ENCODE measurements at regions of chr1 and their contacts with region 1.

Region 1: DNA sequence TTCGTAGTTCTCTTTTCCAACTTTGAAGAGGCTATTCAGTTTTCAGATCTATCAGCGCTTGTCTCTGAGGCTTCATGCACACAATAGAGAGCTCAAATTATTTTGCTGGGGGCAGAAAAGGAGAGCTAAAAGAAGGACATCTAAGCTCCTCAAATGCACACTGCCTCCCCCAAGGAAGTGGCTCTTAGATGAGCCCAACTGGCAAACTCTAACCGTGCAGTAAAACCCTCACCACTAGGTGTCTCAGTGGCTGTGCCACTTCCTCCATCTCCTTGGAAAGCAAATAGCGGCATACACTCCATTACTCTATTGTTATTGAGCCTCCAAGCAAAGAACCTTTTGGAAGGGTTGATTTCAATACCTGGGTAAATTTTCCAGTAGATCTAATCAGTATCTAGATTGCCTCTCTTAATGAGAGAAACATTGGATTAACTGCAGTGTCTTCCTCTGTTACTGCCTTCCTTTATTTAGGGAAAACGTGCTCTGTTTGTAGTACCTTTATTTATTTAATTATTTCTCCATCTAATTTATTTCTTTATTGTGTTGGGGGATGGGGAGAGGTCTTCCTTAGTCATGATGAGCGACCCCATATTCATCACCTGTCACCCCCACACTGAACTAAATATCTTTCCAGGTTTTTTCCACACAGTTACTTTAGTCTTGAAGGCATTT is 9.2 kb upstream of the SFPQ start:
- DNase-seq: peak; percentile 84
- H3K4me3 Mint-ChIP-seq: no peak overlapping the region
- H3K27ac Mint-ChIP-seq: no peak overlapping the region
- H3K4me1 Mint-ChIP-seq: peaks cover 7% of the 10 kb centered on the region
- H3K27me3 Mint-ChIP-seq: no peaks in the 10 kb centered on the region

Region 2: DNA sequence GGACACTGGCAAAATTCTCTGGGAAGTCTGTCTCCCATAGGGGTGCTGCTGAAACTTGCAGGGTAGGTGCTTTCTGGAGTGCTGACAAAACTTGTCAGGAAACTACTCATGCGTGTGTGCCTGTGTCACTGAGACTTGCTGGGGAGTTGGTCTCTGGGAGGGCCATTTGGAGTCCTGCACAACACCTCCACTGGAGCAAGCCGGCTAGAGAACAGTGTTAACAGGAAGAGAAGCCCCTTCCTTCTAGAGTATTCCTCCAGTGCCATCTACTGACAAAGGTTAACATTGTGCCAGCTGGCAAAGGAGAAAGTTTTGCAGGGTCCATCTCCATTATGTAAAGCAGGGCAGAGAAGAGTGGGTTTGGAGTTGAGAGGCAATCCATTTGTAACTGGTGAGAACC is 96.3 kb after region 1 on chr1:
- CTCF ChIA-PET with region 1: interaction called, 22 read pairs
- intact Hi-C with region 1: loop called (anchors 1 kb)
- DNase-seq: peak; percentile 40
- H3K4me3 Mint-ChIP-seq: no peak overlapping the region
- H3K27ac Mint-ChIP-seq: peak overlapping the region; percentile 28
- H3K4me1 Mint-ChIP-seq: peaks cover 13% of the 10 kb centered on the region
- H3K27me3 Mint-ChIP-seq: no peaks in the 10 kb centered on the region

Region 3: DNA sequence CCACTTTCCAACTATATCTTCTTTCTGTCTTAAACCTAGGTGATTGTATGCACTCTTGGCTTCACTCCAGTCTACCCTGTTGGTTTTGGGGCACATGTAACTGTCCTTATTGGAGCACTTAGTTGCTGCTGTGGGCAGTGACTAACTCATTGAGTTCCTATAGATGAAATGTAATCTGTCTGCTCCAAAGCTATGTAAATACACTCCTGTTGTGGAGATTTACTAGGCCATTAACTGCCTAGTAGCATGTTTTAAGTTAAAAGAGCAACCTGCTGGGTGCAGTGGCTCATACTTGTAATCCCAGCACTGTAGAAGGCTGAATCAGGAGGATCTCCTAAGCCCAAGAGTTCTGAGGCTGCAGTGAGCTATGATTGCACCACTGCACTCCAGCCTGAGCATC is 203.9 kb after region 1 on chr1:
- CTCF ChIA-PET with region 1: no interaction called
- intact Hi-C with region 1: loop called (anchors 10 kb)
- DNase-seq: no peak
- H3K4me3 Mint-ChIP-seq: no peak overlapping the region
- H3K27ac Mint-ChIP-seq: no peak overlapping the region
- H3K4me1 Mint-ChIP-seq: no peaks in the 10 kb centered on the region
- H3K27me3 Mint-ChIP-seq: no peaks in the 10 kb centered on the region

Region 4: DNA sequence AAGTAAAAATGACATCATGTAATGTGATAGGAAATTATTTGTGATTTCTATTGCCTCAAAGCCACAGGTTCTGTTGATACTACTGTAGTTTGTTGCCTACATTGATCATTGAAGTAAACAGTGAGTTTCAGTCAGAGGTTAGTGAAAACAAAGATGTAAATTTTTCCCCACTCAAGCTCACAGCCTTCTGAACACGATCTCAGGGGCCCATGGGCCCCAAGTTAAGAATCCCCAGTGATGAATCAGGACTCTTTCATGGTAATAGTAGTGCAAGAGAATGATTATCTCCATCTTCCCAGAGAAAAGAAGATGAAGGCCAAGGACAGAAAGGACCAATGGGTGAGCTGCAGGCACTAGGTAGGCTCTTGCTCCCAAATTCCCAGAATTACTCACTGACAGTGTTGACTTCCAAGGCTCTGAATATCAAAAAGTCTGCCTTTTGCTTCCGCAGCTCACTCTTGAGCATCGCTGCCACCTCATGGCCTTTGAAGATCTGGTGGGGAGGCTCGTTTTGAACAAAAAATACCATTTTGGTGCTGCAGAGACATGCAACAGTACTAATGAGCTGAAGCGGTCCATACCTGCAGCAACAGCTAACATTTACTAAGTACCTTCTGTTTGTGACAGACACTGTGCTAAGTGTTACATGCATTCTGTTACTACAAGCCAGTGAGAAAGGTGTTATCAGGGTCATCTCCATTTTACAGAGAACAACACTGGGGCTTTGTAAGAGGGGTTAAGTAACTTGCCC is 241.8 kb after region 1 on chr1:
- CTCF ChIA-PET with region 1: interaction called, 3 read pairs
- intact Hi-C with region 1: loop called (anchors 5 kb)
- DNase-seq: peak; percentile 12
- H3K4me3 Mint-ChIP-seq: no peak overlapping the region
- H3K27ac Mint-ChIP-seq: no peak overlapping the region
- H3K4me1 Mint-ChIP-seq: peaks cover 12% of the 10 kb centered on the region
- H3K27me3 Mint-ChIP-seq: no peaks in the 10 kb centered on the region

Region 5: DNA sequence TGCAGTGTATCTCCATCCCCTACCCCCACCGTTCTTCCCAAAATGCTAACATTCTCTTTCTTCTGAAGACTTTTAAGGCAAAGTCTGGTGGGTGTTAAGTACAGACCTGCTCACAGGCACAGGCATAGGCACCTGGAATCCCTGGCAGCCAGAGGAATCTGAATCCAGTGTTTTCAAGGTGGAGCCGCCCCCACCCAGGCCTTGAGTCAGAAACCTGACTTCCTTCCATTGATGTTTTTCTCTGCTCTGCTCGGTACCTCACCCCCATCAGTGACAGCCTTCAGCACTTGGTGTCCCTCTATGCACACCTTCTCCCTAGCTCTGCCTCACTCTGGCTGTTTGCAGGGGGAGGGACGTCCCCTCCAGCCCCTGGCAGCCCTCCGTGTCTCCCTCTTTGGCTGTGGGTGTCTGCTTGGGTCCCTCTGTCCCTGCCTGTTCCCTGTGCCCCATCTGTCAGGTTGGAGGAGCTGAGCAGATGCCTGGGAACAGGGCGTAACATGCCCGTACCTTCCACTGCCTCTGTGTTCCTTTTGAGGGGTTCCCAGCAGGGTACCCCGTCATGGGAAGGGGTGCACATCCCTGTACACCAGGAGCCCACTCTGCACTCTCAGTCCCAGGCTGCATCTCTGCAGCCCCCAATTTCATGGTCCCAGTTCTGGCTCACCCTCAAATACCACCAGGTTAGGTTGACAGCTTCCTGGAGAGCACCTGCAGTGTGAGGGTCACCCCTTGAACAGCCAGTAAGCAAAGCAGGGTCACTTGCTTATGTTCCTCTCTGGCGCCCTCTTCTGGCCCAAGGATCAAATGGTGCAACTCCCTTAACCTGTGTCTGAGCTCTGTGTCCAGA is 362.1 kb after region 1 on chr1:
- CTCF ChIA-PET with region 1: interaction called, 3 read pairs
- intact Hi-C with region 1: loop called (anchors 2 kb)
- DNase-seq: peak; percentile 92
- H3K4me3 Mint-ChIP-seq: no peak overlapping the region
- H3K27ac Mint-ChIP-seq: no peak overlapping the region
- H3K4me1 Mint-ChIP-seq: peaks cover 16% of the 10 kb centered on the region
- H3K27me3 Mint-ChIP-seq: no peaks in the 10 kb centered on the region

Region 6: GRCh38 chr1:35915693-35916092 is 713.5 kb after region 1 on chr1:
- CTCF ChIA-PET with region 1: no interaction called
- intact Hi-C with region 1: no loop called
- DNase-seq: no peak
- H3K4me3 Mint-ChIP-seq: no peak overlapping the region
- H3K27ac Mint-ChIP-seq: no peak overlapping the region
- H3K4me1 Mint-ChIP-seq: no peaks in the 10 kb centered on the region
- H3K27me3 Mint-ChIP-seq: no peaks in the 10 kb centered on the region

Measured in activated naive CD4-positive, alpha-beta T cell treated with anti-CD3 and anti-CD28 coated beads for 36 hours (primary cell).